Activated naive CD8-positive, alpha-beta T cell treated with anti-CD3 and anti-CD28 coated beads, Interleukin-2, amount 10 ng/mL, durations not matched to agents 7 days and 5 days (primary cell): ENCODE measurements at regions of chr19 and their contacts with region 1.

Region 1: GRCh38 chr19:49570138-49570856 is 10.1 kb downstream of the NOSIP start:
- DNase-seq: no peak
- ATAC-seq: peak; percentile 45
- H3K4me3 Mint-ChIP-seq: peak overlapping the region; percentile 14
- H3K27ac Mint-ChIP-seq: peak overlapping the region; percentile 63
- H3K4me1 Mint-ChIP-seq: peaks cover 36% of the 10 kb centered on the region
- H3K27me3 Mint-ChIP-seq: no peaks in the 10 kb centered on the region

Region 2: GRCh38 chr19:49486232-49486631 is 84.1 kb before region 1 on chr19:
- POLR2A ChIA-PET with region 1: no interaction called
- DNase-seq: no peak
- ATAC-seq: no peak
- H3K4me3 Mint-ChIP-seq: no peak overlapping the region
- H3K27ac Mint-ChIP-seq: peak overlapping the region; percentile 73
- H3K4me1 Mint-ChIP-seq: peaks cover 31% of the 10 kb centered on the region
- H3K27me3 Mint-ChIP-seq: no peaks in the 10 kb centered on the region

Region 3: GRCh38 chr19:49555600-49556411 is 14.5 kb before region 1 on chr19:
- POLR2A ChIA-PET with region 1: interaction called, 41 read pairs
- DNase-seq: peak; percentile 82
- ATAC-seq: peak; percentile 26
- H3K4me3 Mint-ChIP-seq: peak overlapping the region; percentile 58
- H3K27ac Mint-ChIP-seq: peak overlapping the region; percentile 92
- H3K4me1 Mint-ChIP-seq: peaks cover 73% of the 10 kb centered on the region
- H3K27me3 Mint-ChIP-seq: no peaks in the 10 kb centered on the region

Region 4: DNA sequence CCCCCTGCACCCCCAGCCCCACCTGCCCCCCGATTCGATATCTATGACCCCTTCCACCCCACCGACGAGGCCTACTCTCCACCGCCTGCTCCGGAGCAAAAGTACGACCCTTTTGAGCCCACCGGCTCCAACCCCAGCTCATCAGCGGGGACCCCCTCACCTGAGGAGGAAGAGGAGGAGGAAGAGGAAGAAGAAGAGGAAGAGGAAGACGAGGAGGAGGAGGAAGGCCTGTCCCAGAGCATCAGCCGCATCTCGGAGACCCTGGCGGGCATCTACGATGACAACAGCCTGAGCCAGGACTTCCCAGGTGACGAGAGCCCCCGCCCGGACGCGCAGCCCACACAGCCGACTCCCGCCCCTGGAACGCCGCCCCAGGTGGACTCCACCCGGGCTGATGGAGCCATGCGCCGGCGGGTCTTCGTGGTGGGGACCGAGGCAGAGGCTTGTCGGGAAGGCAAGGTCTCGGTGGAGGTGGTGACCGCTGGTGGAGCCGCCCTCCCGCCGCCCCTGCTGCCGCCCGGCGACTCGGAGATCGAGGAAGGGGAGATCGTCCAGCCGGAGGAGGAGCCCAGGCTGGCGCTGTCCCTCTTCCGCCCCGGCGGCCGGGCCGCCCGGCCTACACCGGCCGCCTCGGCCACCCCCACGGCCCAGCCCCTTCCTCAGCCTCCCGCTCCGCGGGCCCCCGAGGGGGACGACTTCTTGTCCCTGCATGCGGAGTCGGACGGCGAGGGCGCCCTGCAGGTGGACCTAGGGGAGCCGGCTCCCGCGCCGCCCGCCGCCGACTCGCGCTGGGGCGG is 80.9 kb after region 1 on chr19:
- POLR2A ChIA-PET with region 1: no interaction called
- DNase-seq: no peak
- ATAC-seq: no peak
- H3K4me3 Mint-ChIP-seq: no peak overlapping the region
- H3K27ac Mint-ChIP-seq: no peak overlapping the region
- H3K4me1 Mint-ChIP-seq: no peaks in the 10 kb centered on the region
- H3K27me3 Mint-ChIP-seq: no peaks in the 10 kb centered on the region